ENCODE measurements at regions of chr14 and their contacts with region 1.

Region 1: GRCh38 chr14:73851644-73852382 is at the start of gene PTGR2:
- DNase-seq: peak; percentile 77 to 97 (median 85)
- ATAC-seq: peak; percentile 93
- H3K4me3 ChIP-seq: peak within 1 kb of the TSS; percentile 63
- H3K4me3 Mint-ChIP-seq: peak within 1 kb of the TSS; percentile 91
- H3K27ac ChIP-seq: peak within 1 kb of the TSS; percentile 54 to 72
- H3K27ac Mint-ChIP-seq: peak within 1 kb of the TSS; percentile 94
- H3K4me1 ChIP-seq: peaks cover 17% of the 10 kb centered on the region
- H3K4me1 Mint-ChIP-seq: peaks cover 24% of the 10 kb centered on the region
- H3K27me3 ChIP-seq: no peaks in the 10 kb centered on the region
- H3K27me3 Mint-ChIP-seq: no peaks in the 10 kb centered on the region
- CTCF ChIP-seq: no peak
- total RNA-seq, gene PTGR2: 0.70 to 1.1 TPM

Region 2: GRCh38 chr14:73886449-73887317 is 34.9 kb after region 1 on chr14 and contains the start of gene ZNF410:
- CTCF ChIA-PET with region 1: interaction called, 3 read pairs
- POLR2A ChIA-PET with region 1: interaction called, 31 read pairs
- intact Hi-C with region 1: loop called (anchors 1 to 5 kb)
- DNase-seq: peak; percentile 66 to 96 (median 78)
- ATAC-seq: peak; percentile 97
- H3K4me3 ChIP-seq: peak within 1 kb of the TSS; percentile 98
- H3K4me3 Mint-ChIP-seq: peak within 1 kb of the TSS; percentile 98
- H3K27ac ChIP-seq: peak within 1 kb of the TSS; percentile 93 to 98
- H3K27ac Mint-ChIP-seq: peak within 1 kb of the TSS; percentile 94
- H3K4me1 ChIP-seq: peaks cover 21% of the 10 kb centered on the region
- H3K4me1 Mint-ChIP-seq: peaks cover 49% of the 10 kb centered on the region
- H3K27me3 ChIP-seq: no peaks in the 10 kb centered on the region
- H3K27me3 Mint-ChIP-seq: no peaks in the 10 kb centered on the region
- CTCF ChIP-seq: no peak
- total RNA-seq, gene ZNF410: 74.3 to 81.1 TPM

Measured in CD4-positive, alpha-beta T cell (primary cell).